IMR-90 (cell line): ENCODE measurements at regions of chr4 and their contacts with region 1.

Region 1: DNA sequence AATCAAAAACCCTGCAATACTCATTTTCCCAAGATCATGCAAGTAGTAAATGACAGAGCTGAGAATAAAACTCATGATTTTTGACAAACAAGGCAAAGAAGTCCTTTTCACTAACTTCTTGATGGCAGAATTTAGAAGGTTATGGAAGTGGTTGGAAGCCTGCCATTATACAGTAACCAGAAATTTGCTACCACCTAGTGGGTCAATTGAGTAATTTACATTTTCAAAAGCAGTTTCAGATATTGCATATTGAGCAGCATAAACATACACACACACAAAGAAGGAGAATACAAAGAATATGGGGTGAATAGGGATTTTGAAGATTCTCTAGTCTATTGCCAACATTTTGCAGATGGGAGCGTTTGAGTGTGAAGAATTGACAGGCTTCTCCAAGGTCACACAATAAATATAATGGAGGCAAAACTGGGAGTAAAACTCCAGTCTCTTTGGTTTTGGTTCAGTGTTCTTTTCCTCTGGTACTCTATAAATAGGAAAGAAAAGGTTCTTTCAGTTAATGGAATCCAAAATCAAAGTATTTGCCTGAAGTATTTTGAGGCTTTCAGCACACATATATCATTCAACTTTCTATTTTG is 70.2 kb downstream of the GC start:
- DNase-seq: peak; percentile 77
- ATAC-seq: peak; percentile 72
- H3K4me3 ChIP-seq: no peak overlapping the region
- H3K27ac ChIP-seq: no peak overlapping the region
- H3K4me1 ChIP-seq: no peaks in the 10 kb centered on the region
- H3K27me3 ChIP-seq: no peaks in the 10 kb centered on the region; the same call in 1 of the 2 replicates
- CTCF ChIP-seq: peak; percentile 77
- POLR2A ChIP-seq: peak; percentile 26; the same call in 1 of the 2 replicates
- RAD21 ChIP-seq: peak; percentile 88

Region 2: DNA sequence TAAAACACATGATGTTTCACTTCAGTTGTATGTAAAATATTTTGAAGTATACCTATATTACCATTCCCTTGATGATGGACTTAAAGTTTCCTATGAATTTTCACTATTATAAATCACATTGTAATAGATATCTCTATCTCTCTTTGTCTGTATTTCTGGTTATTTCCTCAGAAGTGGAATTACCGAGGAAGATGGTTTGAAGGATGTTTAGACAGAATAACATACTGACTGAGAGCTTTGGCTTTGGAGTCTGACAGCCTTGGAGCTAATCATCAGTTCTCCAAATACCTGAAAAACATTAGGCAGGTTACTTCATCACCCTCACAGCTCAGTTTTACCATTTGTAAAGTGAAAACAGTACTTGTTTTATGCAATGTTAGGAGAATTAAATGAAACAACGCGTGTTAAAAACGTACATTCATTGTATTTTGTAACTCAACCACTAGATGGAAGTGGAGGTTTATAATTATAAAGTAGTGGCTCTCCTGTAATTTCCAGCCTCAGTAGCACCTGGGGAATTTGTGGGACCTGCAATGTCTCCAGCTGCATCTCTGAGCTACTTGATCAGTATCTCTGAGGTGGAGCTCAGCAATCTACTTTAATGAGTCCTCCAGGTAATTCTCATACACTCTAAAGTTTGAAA is 1061.7 kb before region 1 on chr4:
- CTCF ChIA-PET with region 1: no interaction called
- POLR2A ChIA-PET with region 1: no interaction called
- dilution Hi-C with region 1: no loop called
- in situ Hi-C with region 1: no loop called
- intact Hi-C with region 1: loop called (anchors 2 kb)
- DNase-seq: peak; percentile 52
- ATAC-seq: peak; percentile 88
- H3K4me3 ChIP-seq: no peak overlapping the region; the same call in 1 of the 2 replicates
- H3K27ac ChIP-seq: no peak overlapping the region
- H3K4me1 ChIP-seq: peaks cover 2% of the 10 kb centered on the region; the same call in 1 of the 2 replicates
- H3K27me3 ChIP-seq: no peaks in the 10 kb centered on the region
- CTCF ChIP-seq: peak; percentile 63
- POLR2A ChIP-seq: no peak
- RAD21 ChIP-seq: peak; percentile 75

Region 3: DNA sequence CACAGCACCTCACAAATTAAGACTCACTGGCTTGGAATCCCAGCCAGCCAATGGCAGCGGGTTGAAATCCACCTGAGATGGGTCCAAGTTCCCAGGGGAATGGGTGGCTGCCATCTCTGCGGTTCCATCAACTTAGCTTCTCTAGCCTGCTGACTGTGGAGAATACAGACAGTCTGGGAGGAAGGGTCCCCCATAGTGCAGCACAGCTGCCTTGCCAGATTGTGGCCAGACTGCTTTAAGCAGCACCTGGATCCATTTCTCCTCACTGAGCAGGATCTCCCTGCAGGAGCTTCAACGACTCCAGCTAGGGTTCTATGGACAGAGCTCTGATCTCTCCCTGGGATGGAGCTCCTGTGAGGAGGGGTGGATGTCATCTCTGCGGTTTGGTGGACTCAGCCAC is 668.5 kb before region 1 on chr4:
- CTCF ChIA-PET with region 1: no interaction called
- POLR2A ChIA-PET with region 1: no interaction called
- dilution Hi-C with region 1: no loop called
- in situ Hi-C with region 1: loop called (anchors 10 kb)
- intact Hi-C with region 1: loop called (anchors 5 kb)
- DNase-seq: no peak
- ATAC-seq: no peak
- H3K4me3 ChIP-seq: no peak overlapping the region
- H3K27ac ChIP-seq: no peak overlapping the region
- H3K4me1 ChIP-seq: no peaks in the 10 kb centered on the region
- H3K27me3 ChIP-seq: no peaks in the 10 kb centered on the region
- CTCF ChIP-seq: no peak
- POLR2A ChIP-seq: no peak
- RAD21 ChIP-seq: no peak

Region 4: GRCh38 chr4:71130827-71131603 is 582.7 kb before region 1 on chr4:
- CTCF ChIA-PET with region 1: no interaction called
- POLR2A ChIA-PET with region 1: no interaction called
- dilution Hi-C with region 1: no loop called
- in situ Hi-C with region 1: loop called (anchors 25 kb)
- intact Hi-C with region 1: loop called (anchors 2 kb)
- DNase-seq: peak; percentile 89
- ATAC-seq: peak; percentile 77
- H3K4me3 ChIP-seq: peak overlapping the region; percentile 49; the same call in 1 of the 2 replicates
- H3K27ac ChIP-seq: peak overlapping the region; percentile 38
- H3K4me1 ChIP-seq: peaks cover 10% of the 10 kb centered on the region
- H3K27me3 ChIP-seq: no peaks in the 10 kb centered on the region
- CTCF ChIP-seq: peak; percentile 50
- POLR2A ChIP-seq: no peak; the same call in 1 of the 2 replicates
- RAD21 ChIP-seq: peak; percentile 58

Region 5: DNA sequence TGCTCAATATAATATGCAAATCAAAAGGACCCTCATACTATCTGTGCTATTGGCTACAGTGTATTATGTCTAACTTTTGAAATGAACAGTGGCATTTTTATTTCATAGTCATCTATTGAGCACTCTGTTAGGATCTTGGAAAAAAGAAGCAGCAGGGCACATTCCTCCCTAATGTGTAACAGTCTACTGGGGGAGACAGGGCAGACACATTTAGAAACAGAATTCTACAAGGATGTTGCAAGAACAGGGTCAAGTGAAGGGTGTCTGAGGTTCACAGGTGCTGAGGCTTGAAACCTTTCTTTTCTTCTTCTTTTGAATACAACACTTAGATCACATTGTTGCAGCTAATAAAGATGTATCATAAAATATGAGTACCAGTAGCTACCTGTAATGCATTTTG is 504.5 kb before region 1 on chr4:
- CTCF ChIA-PET with region 1: no interaction called
- POLR2A ChIA-PET with region 1: no interaction called
- dilution Hi-C with region 1: no loop called
- in situ Hi-C with region 1: loop called (anchors 25 kb)
- intact Hi-C with region 1: no loop called
- DNase-seq: peak; percentile 82
- ATAC-seq: peak; percentile 72
- H3K4me3 ChIP-seq: no peak overlapping the region
- H3K27ac ChIP-seq: no peak overlapping the region
- H3K4me1 ChIP-seq: peaks cover 17% of the 10 kb centered on the region
- H3K27me3 ChIP-seq: no peaks in the 10 kb centered on the region
- CTCF ChIP-seq: no peak
- POLR2A ChIP-seq: no peak
- RAD21 ChIP-seq: no peak

Region 6: GRCh38 chr4:71270901-71271300 is 442.8 kb before region 1 on chr4:
- CTCF ChIA-PET with region 1: interaction called, 3 read pairs
- POLR2A ChIA-PET with region 1: no interaction called
- dilution Hi-C with region 1: no loop called
- in situ Hi-C with region 1: loop called (anchors 10 kb)
- intact Hi-C with region 1: loop called (anchors 1 kb)
- DNase-seq: peak; percentile 45
- ATAC-seq: no peak
- H3K4me3 ChIP-seq: no peak overlapping the region
- H3K27ac ChIP-seq: no peak overlapping the region
- H3K4me1 ChIP-seq: peaks cover 14% of the 10 kb centered on the region
- H3K27me3 ChIP-seq: no peaks in the 10 kb centered on the region
- CTCF ChIP-seq: peak; percentile 52
- POLR2A ChIP-seq: no peak
- RAD21 ChIP-seq: peak; percentile 72

Region 7: DNA sequence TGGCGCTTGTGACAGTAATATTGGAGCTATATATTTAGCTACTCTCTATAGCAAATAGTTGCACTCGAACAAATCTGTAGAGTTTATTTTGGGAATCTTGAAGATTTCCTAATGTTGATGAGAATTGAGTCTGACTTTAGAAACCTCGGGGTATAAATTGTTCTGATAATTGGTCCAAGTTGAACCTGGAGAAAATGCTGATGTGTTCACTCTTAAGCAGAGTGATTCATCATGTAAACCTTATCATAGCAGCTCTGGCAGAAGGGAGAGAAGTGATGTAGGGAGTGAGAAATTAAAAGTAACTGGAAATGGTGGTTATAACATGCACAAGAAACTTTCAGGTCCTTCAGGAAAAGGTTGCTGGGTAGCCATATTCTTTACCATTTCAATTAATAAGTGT is 391.3 kb before region 1 on chr4:
- CTCF ChIA-PET with region 1: no interaction called
- POLR2A ChIA-PET with region 1: no interaction called
- dilution Hi-C with region 1: no loop called
- in situ Hi-C with region 1: no loop called
- intact Hi-C with region 1: no loop called
- DNase-seq: peak; percentile 43
- ATAC-seq: peak; percentile 58
- H3K4me3 ChIP-seq: no peak overlapping the region
- H3K27ac ChIP-seq: no peak overlapping the region
- H3K4me1 ChIP-seq: peaks cover 4% of the 10 kb centered on the region
- H3K27me3 ChIP-seq: no peaks in the 10 kb centered on the region
- CTCF ChIP-seq: no peak
- POLR2A ChIP-seq: no peak
- RAD21 ChIP-seq: no peak

Region 8: GRCh38 chr4:71553605-71554004 is 160.1 kb before region 1 on chr4:
- CTCF ChIA-PET with region 1: no interaction called
- POLR2A ChIA-PET with region 1: no interaction called
- dilution Hi-C with region 1: no loop called
- in situ Hi-C with region 1: no loop called
- intact Hi-C with region 1: loop called (anchors 5 kb)
- DNase-seq: peak; percentile 64
- ATAC-seq: peak; percentile 53; the same call in 1 of the 2 replicates
- H3K4me3 ChIP-seq: no peak overlapping the region
- H3K27ac ChIP-seq: no peak overlapping the region
- H3K4me1 ChIP-seq: peaks cover 9% of the 10 kb centered on the region
- H3K27me3 ChIP-seq: no peaks in the 10 kb centered on the region
- CTCF ChIP-seq: peak; percentile 63
- POLR2A ChIP-seq: no peak
- RAD21 ChIP-seq: peak; percentile 85